ENCODE measurements at regions of chr1 and their contacts with region 1.

Region 1: DNA sequence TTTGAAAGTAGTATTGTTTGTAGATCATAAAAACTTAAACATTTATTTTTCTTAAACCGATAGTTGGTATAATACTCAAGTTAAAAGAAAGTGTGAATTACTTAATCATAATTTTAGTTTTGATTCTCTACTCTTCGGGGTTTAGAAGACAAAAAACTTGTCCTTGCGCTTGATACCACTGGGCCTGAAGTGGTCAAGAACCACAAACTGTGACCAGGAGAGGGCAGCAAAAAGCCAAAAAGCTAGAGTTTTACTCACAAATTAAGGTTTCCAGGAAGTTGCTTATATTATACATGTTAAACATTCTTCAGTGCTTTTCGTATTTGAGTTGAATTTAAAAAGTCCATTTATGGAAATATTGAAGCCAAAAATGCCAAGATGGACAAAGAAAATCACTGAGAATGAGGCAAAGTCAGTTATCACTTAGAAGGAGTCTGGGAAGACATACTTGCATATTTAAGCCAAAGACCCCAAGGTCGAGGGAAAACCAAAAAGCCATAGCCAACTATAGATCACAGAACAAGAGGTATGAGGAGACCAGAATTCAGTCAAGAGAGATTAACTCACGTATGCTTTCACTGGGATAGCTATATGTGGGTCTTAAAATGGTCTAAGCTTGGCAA is 34.2 kb downstream of the EFCAB7 start:
- DNase-seq: peak; percentile 51
- H3K4me3 Mint-ChIP-seq: no peak overlapping the region
- H3K27ac Mint-ChIP-seq: no peak overlapping the region
- H3K4me1 Mint-ChIP-seq: peaks cover 5% of the 10 kb centered on the region
- H3K27me3 Mint-ChIP-seq: no peaks in the 10 kb centered on the region
- CTCF ChIP-seq: peak; percentile 52

Region 2: GRCh38 chr1:63569640-63570316 is 12.3 kb after region 1 on chr1:
- CTCF ChIA-PET with region 1: interaction called, 22 read pairs
- POLR2A ChIA-PET with region 1: interaction called, 3 read pairs
- intact Hi-C with region 1: no loop called
- DNase-seq: no peak
- H3K4me3 Mint-ChIP-seq: no peak overlapping the region
- H3K27ac Mint-ChIP-seq: no peak overlapping the region
- H3K4me1 Mint-ChIP-seq: no peaks in the 10 kb centered on the region
- H3K27me3 Mint-ChIP-seq: no peaks in the 10 kb centered on the region
- CTCF ChIP-seq: no peak

Region 3: DNA sequence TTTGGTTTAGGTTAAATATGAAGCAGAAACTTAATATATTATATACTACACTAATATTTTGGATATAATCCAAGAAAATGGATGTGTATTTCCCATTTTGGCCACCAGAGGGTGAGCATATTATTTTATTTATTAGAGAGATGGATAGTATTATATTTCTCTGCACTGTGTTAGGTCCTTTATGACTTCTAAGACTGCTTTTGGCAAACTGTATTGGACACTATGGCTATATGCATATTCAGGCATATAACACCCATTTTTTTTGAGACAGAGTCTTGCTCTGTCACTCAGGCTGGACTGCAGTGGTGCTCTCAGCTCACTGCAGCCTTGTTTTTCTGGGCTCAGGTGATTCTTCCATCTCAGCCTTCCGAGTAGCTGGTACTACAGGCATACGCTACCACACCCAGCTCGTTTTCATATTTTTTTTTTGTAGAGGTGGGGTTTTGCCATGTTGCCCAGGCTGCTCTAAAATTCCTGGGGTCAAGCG is 17.9 kb after region 1 on chr1:
- CTCF ChIA-PET with region 1: interaction called, 22 read pairs
- POLR2A ChIA-PET with region 1: interaction called, 3 read pairs
- intact Hi-C with region 1: no loop called
- DNase-seq: peak; percentile 66
- H3K4me3 Mint-ChIP-seq: no peak overlapping the region
- H3K27ac Mint-ChIP-seq: no peak overlapping the region
- H3K4me1 Mint-ChIP-seq: peaks cover 7% of the 10 kb centered on the region
- H3K27me3 Mint-ChIP-seq: no peaks in the 10 kb centered on the region
- CTCF ChIP-seq: peak; percentile 40

Region 4: GRCh38 chr1:63772876-63773275 is 215.4 kb after region 1 on chr1:
- CTCF ChIA-PET with region 1: no interaction called
- POLR2A ChIA-PET with region 1: no interaction called
- intact Hi-C with region 1: no loop called
- DNase-seq: no peak
- H3K4me3 Mint-ChIP-seq: peak overlapping the region; percentile 93
- H3K27ac Mint-ChIP-seq: no peak overlapping the region
- H3K4me1 Mint-ChIP-seq: peaks cover 16% of the 10 kb centered on the region
- H3K27me3 Mint-ChIP-seq: no peaks in the 10 kb centered on the region
- CTCF ChIP-seq: no peak

Measured in MCF 10A (cell line).